ENCODE measurements at regions of chr18 and their contacts with region 1.

Region 1: GRCh38 chr18:21904856-21905255 is 164.3 kb downstream of the MIB1 start:
- DNase-seq: no peak

Region 2: DNA sequence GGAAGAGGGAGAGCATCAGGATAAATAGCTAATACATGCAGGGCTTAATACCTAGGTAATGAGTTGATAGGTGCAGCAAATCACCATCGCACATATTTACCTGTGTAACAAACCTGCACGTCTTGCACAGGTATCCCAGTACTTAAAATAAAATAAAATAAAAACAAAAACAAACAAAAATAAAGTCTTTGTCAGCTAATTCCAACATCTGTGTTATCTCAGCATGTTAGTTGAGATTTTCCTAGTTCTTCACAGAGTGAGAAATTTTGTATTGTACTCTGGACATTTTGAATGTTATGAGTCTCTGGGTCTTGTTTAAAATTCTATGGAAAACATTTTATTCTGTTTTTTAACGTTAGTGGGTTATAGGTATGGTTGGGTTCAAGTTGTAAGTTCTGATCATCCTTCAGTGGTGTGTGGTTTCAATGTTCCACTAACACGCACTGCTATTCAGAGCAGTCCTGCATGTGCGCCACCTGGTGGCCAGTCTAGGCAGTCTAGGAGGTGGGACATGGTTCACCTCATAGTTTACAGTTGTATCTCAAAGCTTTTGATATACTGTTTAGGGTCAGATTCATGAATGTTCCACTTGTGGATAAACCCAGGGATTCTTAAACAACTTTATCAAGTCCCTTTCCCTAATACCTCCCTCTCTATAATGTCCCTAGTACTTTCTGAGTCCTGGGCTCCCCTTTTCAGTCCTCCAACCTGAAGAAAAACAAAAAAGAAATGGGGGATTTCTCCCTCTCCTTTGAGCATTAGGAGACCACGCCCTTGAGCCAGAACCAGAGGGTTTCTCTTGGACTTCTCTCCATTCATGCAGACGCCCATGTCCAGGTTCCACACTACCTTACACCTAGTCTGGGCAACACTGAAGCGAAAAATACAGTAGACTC is 51.1 kb after region 1 on chr18:
- intact Hi-C with region 1: loop called (anchors 5 kb)
- DNase-seq: peak; percentile 82

Region 3: DNA sequence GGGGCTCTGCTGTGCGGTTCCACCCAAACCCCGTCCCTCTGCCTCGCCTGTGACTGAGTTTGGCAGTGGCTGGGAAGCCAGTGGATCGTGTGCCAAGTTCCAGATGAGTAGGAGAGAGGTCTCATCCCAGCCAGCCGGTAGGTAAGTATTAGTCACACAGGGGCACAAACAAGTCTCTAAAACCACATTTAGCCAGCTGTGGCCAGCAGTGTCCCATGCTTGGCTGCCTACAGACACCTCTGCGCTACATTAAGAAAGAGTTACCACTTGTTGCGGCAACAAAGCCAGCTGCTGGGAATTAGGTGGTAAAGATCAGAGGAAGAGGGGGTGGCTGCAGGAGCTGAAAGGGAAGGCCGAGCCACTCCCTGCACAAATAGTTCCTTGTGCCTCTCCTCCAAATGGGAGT is 345.7 kb after region 1 on chr18:
- intact Hi-C with region 1: no loop called
- DNase-seq: no peak

Region 4: GRCh38 chr18:22378672-22379282 is 473.9 kb after region 1 on chr18:
- intact Hi-C with region 1: loop called (anchors 10 kb)
- DNase-seq: no peak